ENCODE measurements at regions of chr2 and their contacts with region 1.

Region 1: DNA sequence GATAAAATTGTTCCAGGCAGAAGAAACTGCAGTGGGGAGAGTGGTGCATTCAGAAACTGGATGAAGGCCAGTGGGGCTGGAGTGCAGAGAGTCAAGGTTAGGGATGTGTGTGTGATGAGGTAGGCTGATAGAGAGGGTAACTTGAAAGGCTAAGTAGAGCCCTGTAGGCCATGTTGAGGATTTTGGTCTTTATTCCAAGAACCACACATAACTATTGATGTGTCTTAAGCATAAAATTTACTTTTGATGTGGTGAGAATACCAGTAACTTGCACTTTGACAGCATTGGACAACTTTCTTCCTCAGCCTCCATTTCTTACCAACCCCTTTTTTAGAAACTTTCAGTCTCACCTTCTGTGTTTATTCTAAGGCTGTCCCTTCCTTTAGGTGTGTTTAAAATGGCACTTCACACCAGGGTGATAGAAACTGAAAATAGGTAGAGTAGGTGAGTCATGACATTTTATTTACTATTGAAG is 22.6 kb downstream of the MTX2 start:
- DNase-seq: no peak
- H3K4me3 ChIP-seq: no peak overlapping the region
- H3K27ac ChIP-seq: 0 out of 2 replicates have a peak overlapping the region, but pooled peaks have one; percentile 2
- H3K4me1 ChIP-seq: 0 out of 2 replicates have a peak, but pooled peaks cover 13% of the 10 kb centered on the region
- H3K27me3 ChIP-seq: no peaks in the 10 kb centered on the region
- CTCF ChIP-seq: no peak

Region 2: GRCh38 chr2:176317199-176317598 is 25.4 kb after region 1 on chr2:
- CTCF ChIA-PET with region 1: no interaction called
- POLR2A ChIA-PET with region 1: interaction called, 28 read pairs
- intact Hi-C with region 1: no loop called
- DNase-seq: no peak
- H3K4me3 ChIP-seq: no peak overlapping the region
- H3K27ac ChIP-seq: no peak overlapping the region
- H3K4me1 ChIP-seq: no peaks in the 10 kb centered on the region
- H3K27me3 ChIP-seq: no peaks in the 10 kb centered on the region
- CTCF ChIP-seq: no peak

Region 3: GRCh38 chr2:177021706-177022343 is 730.0 kb after region 1 on chr2:
- CTCF ChIA-PET with region 1: interaction called, 17 read pairs
- POLR2A ChIA-PET with region 1: no interaction called
- intact Hi-C with region 1: no loop called
- DNase-seq: no peak
- H3K4me3 ChIP-seq: no peak overlapping the region
- H3K27ac ChIP-seq: no peak overlapping the region
- H3K4me1 ChIP-seq: no peaks in the 10 kb centered on the region
- H3K27me3 ChIP-seq: peaks cover 57% of the 10 kb centered on the region
- CTCF ChIP-seq: no peak

Measured in PC-9 (cell line).